ENCODE measurements at regions of chr19 and their contacts with region 1.

Region 1: DNA sequence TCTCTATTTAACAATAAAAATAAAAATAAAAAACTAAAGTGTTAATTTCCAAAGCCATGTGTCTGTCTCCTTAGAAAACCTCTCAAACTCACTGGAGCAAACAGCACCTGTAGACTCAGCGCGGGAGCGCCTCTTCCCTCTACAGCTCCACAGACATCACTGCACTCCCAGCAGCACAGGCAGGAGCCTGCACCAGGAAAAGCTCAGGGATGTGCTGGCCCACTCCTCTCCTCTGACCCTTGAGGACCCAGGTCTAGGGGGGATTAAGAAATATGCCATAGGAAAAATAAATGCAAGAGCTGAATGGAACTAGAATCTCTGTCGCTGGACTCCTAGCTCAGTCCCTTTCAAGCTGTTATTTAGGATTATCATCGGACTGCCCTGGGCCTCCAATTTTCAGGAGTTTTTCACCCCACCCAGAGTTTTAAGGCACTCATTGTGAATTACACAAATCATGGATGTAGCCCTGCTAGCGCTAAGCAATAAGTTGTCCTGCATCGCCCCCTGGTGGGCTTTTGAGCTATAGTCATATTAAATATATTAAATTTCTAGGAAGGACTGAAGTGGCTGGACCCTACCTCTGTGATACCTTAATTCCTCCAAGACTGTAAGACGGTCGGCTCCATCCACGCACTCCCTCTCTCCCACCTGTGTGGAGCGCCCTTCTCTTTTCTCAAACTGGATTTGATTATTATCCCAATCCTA is 333.9 kb downstream of the UQCRFS1 start:
- DNase-seq: peak; percentile 73
- ATAC-seq: peak; percentile 24

Region 2: DNA sequence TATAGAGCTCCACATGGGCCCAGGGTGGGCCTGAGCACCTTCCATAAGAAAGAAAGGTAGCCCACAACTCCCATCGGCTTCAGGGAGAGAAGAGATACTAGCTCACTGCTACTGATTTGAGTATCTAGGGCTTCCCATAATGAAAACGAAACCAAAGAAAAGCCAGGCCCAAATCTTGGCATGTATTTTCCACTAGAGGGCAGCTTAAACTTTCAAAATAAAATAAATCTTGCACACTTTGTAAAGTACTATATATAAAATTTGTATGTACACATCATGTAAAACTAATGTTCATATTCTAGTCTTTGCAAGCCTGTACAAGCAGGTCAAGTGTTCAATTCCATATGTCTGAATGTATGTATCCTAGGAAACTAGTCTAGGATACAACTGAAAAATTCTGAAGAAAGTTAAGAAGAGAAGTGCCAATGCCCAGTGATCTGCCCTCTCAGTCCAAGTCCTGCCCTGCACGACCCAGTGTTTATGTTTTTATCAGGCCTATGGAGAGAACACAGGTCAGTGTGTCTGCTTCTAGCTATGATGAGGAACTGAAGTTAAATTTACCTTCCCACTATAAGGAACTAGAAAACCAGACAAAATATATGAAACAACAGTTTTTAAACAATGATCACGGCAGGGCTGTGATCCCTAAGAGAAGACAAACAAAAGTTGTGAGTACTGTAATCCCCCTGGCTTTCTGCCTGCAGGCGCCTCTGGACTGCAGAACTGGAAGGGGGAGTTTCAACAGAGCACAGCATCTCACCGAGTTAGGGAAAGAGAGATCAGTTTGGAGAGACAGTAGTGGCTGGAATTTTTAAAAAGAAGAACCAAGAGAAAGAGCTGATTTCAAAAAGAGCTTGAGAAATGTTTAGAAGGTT is 141.8 kb before region 1 on chr19:
- intact Hi-C with region 1: loop called (anchors 5 kb)
- DNase-seq: no peak
- ATAC-seq: peak; percentile 79

Region 3: GRCh38 chr19:28764066-28764465 is 114.9 kb before region 1 on chr19:
- intact Hi-C with region 1: no loop called
- DNase-seq: no peak
- ATAC-seq: no peak

Region 4: DNA sequence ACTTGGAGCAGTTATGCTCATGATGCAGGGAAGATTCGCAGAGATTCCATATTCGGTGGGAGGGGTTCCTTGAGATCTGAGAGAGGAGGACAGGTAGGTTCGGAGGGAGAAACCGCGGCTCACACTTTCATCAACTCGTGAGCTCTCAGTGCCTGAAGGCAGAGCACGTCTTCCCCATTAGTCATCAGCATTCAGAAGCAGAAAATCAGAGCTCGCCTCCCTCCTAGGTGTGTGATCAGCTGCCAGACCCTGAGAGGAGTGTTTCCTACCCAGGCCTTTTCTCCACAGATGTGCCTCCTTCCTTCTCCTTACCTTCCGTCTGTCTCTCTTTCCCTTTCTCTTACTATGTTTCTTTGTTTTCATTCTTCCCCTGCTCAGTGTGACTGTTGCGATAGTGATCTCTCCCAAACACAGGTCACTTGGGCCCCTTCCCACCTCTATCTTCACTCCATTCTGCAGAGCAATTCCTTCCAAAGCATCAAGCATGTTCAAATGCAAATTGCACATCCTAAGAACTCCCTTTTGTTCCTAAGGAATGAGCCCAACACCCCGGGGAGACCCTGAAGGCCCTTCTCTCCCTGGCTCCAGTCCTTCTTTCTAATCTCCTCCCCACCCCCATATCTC is 55.6 kb before region 1 on chr19:
- intact Hi-C with region 1: no loop called
- DNase-seq: no peak
- ATAC-seq: no peak